MCF 10A (cell line): ENCODE measurements at regions of chr3 and their contacts with region 1.

Region 1: GRCh38 chr3:194671900-194672808 is at the start of gene LSG1:
- DNase-seq: peak; percentile 94
- H3K4me3 Mint-ChIP-seq: peak within 1 kb of the TSS; percentile 99
- H3K27ac Mint-ChIP-seq: peak within 1 kb of the TSS; percentile 97
- H3K4me1 Mint-ChIP-seq: peaks cover 22% of the 10 kb centered on the region
- H3K27me3 Mint-ChIP-seq: no peaks in the 10 kb centered on the region
- CTCF ChIP-seq: no peak
- total RNA-seq, gene LSG1: 30.5 and 35.1 TPM in 2 replicates

Region 2: GRCh38 chr3:194622640-194623340 is 49.4 kb before region 1 on chr3:
- CTCF ChIA-PET with region 1: no interaction called
- POLR2A ChIA-PET with region 1: no interaction called
- intact Hi-C with region 1: no loop called
- DNase-seq: no peak
- H3K4me3 Mint-ChIP-seq: no peak overlapping the region
- H3K27ac Mint-ChIP-seq: no peak overlapping the region
- H3K4me1 Mint-ChIP-seq: no peaks in the 10 kb centered on the region
- H3K27me3 Mint-ChIP-seq: no peaks in the 10 kb centered on the region
- CTCF ChIP-seq: no peak

Region 3: DNA sequence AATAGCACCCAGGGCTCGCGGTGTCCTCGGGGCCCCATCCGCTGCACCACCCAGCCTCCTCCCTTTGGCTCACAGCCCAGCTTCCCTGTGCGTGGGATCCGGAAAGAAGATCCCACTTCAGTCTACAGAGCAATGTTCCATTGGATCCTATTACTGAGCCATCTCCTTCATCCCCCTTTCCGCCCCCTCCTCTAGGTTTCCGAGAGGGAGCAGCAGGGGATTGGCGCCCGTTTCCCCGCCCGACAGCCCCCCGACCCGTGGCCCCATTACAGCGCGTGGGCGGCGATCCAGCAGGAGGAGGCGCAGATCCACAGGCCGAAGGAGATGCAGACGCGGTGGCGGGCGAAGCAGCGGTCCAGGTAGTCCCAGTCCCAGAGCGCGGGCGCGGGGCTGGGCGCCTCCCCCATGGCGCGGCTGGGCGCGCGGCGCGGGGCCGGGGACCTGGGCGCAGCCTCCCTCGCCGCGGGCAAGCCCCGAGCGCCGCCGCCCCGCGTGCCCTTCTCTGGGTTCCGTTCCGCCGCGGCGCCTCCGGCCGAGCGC is 39.3 kb before region 1 on chr3:
- CTCF ChIA-PET with region 1: no interaction called
- POLR2A ChIA-PET with region 1: interaction called, 14 read pairs
- intact Hi-C with region 1: no loop called
- DNase-seq: peak; percentile 54
- H3K4me3 Mint-ChIP-seq: peak overlapping the region; percentile 92
- H3K27ac Mint-ChIP-seq: no peak overlapping the region
- H3K4me1 Mint-ChIP-seq: peaks cover 6% of the 10 kb centered on the region
- H3K27me3 Mint-ChIP-seq: no peaks in the 10 kb centered on the region
- CTCF ChIP-seq: no peak

Region 4: DNA sequence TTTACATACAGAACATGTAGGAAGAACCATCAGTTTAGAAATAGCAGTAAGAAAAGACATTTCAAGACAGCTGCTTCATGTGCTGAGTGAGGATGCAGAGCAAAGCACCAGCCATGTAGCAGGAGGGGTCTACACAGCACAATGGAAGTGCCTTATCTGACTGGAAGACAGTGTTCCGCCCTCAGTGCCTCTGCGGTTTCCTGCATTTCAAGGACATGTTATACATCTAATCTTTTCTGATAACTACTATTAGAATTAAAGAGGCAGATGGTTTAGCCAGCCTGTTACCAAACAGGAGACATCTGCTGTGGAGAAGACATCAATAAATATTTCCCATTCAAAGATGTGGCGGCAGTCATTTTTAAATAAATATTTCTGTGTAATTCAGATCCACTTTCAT is 10.8 kb before region 1 on chr3:
- CTCF ChIA-PET with region 1: interaction called, 19 read pairs
- POLR2A ChIA-PET with region 1: interaction called, 16 read pairs
- intact Hi-C with region 1: no loop called
- DNase-seq: no peak
- H3K4me3 Mint-ChIP-seq: no peak overlapping the region
- H3K27ac Mint-ChIP-seq: no peak overlapping the region
- H3K4me1 Mint-ChIP-seq: no peaks in the 10 kb centered on the region
- H3K27me3 Mint-ChIP-seq: no peaks in the 10 kb centered on the region
- CTCF ChIP-seq: no peak

Region 5: GRCh38 chr3:195106418-195106906 is 434.3 kb after region 1 on chr3:
- CTCF ChIA-PET with region 1: interaction called, 30 read pairs
- POLR2A ChIA-PET with region 1: no interaction called
- intact Hi-C with region 1: no loop called
- DNase-seq: peak; percentile 34
- H3K4me3 Mint-ChIP-seq: peak overlapping the region; percentile 61
- H3K27ac Mint-ChIP-seq: no peak overlapping the region
- H3K4me1 Mint-ChIP-seq: peaks cover 15% of the 10 kb centered on the region
- H3K27me3 Mint-ChIP-seq: no peaks in the 10 kb centered on the region
- CTCF ChIP-seq: peak; percentile 93

Region 6: GRCh38 chr3:195259475-195260279 is 587.5 kb after region 1 on chr3:
- CTCF ChIA-PET with region 1: interaction called, 16 read pairs
- POLR2A ChIA-PET with region 1: interaction called, 14 read pairs
- intact Hi-C with region 1: loop called (anchors 1 kb)
- DNase-seq: peak; percentile 94
- H3K4me3 Mint-ChIP-seq: peak overlapping the region; percentile 67
- H3K27ac Mint-ChIP-seq: no peak overlapping the region
- H3K4me1 Mint-ChIP-seq: peaks cover 11% of the 10 kb centered on the region
- H3K27me3 Mint-ChIP-seq: no peaks in the 10 kb centered on the region
- CTCF ChIP-seq: peak; percentile 86

Region 7: GRCh38 chr3:195442573-195443390 is 770.6 kb after region 1 on chr3 and contains the start of gene ACAP2:
- CTCF ChIA-PET with region 1: no interaction called
- POLR2A ChIA-PET with region 1: interaction called, 10 read pairs
- intact Hi-C with region 1: no loop called
- DNase-seq: peak; percentile 99
- H3K4me3 Mint-ChIP-seq: peak within 1 kb of the TSS; percentile 96
- H3K27ac Mint-ChIP-seq: peak within 1 kb of the TSS; percentile 94
- H3K4me1 Mint-ChIP-seq: peaks cover 19% of the 10 kb centered on the region
- H3K27me3 Mint-ChIP-seq: no peaks in the 10 kb centered on the region
- CTCF ChIP-seq: no peak
- total RNA-seq, gene ACAP2: 53.2 and 64.3 TPM in 2 replicates